ENCODE measurements at regions of chr7 and their contacts with region 1.

Region 1: GRCh38 chr7:91880413-91881241 is at the start of gene MTERF1:
- DNase-seq: peak; percentile 94 to 96
- H3K4me3 ChIP-seq: peak within 1 kb of the TSS; percentile 51
- H3K4me3 Mint-ChIP-seq: peak within 1 kb of the TSS; percentile 90
- H3K27ac Mint-ChIP-seq: peak within 1 kb of the TSS; percentile 86
- H3K4me1 ChIP-seq: no peaks in the 10 kb centered on the region
- H3K4me1 Mint-ChIP-seq: no peaks in the 10 kb centered on the region
- H3K27me3 ChIP-seq: no peaks in the 10 kb centered on the region
- H3K27me3 Mint-ChIP-seq: no peaks in the 10 kb centered on the region
- CTCF ChIP-seq: peak; percentile 97 to 100
- total RNA-seq, gene MTERF1: 16.2 and 16.9 TPM in 2 replicates

Region 2: DNA sequence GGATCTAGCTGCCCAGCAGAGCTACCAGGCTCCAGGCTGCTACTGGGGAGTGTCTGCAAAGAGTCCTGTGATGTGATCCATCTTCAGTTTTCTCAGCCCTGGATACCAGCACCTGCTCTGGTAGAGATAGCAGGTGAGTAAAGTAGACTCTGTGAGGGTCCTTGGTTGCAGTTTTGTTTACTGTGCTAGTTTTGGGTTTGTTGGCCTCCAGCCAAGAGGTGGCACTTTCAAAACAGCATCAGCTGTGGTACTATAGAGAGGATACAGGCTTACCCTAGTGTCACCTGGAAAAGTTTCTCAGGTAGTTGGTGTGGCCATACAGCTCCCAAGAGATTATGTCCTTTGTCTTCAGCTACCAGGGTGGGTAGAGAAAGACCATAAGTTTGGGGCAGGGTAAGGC is 56.4 kb before region 1 on chr7:
- CTCF ChIA-PET with region 1: no interaction called
- POLR2A ChIA-PET with region 1: no interaction called
- intact Hi-C with region 1: no loop called
- DNase-seq: no peak
- H3K4me3 ChIP-seq: no peak overlapping the region
- H3K4me3 Mint-ChIP-seq: no peak overlapping the region
- H3K27ac Mint-ChIP-seq: no peak overlapping the region
- H3K4me1 ChIP-seq: no peaks in the 10 kb centered on the region
- H3K4me1 Mint-ChIP-seq: no peaks in the 10 kb centered on the region
- H3K27me3 ChIP-seq: no peaks in the 10 kb centered on the region
- H3K27me3 Mint-ChIP-seq: no peaks in the 10 kb centered on the region
- CTCF ChIP-seq: no peak

Region 3: GRCh38 chr7:91940572-91941341 is 60.1 kb after region 1 on chr7 and contains the start of gene AKAP9:
- CTCF ChIA-PET with region 1: interaction called, 14 read pairs
- POLR2A ChIA-PET with region 1: interaction called, 3 read pairs
- intact Hi-C with region 1: loop called (anchors 2 kb)
- DNase-seq: peak; percentile 95 to 96
- H3K4me3 ChIP-seq: peak within 1 kb of the TSS; percentile 76
- H3K4me3 Mint-ChIP-seq: peak within 1 kb of the TSS; percentile 95
- H3K27ac Mint-ChIP-seq: peak within 1 kb of the TSS; percentile 98
- H3K4me1 ChIP-seq: peaks cover 12% of the 10 kb centered on the region
- H3K4me1 Mint-ChIP-seq: peaks cover 16% of the 10 kb centered on the region
- H3K27me3 ChIP-seq: no peaks in the 10 kb centered on the region
- H3K27me3 Mint-ChIP-seq: no peaks in the 10 kb centered on the region
- CTCF ChIP-seq: no peak
- total RNA-seq, gene AKAP9: 73.8 and 79.4 TPM in 2 replicates

Region 4: GRCh38 chr7:92043637-92044036 is 163.0 kb after region 1 on chr7:
- CTCF ChIA-PET with region 1: interaction called, 4 read pairs
- POLR2A ChIA-PET with region 1: no interaction called
- intact Hi-C with region 1: loop called (anchors 1 kb)
- DNase-seq: no peak
- H3K4me3 ChIP-seq: no peak overlapping the region
- H3K4me3 Mint-ChIP-seq: peak overlapping the region; percentile 40
- H3K27ac Mint-ChIP-seq: peak overlapping the region; percentile 70
- H3K4me1 ChIP-seq: peaks cover 60% of the 10 kb centered on the region
- H3K4me1 Mint-ChIP-seq: peaks cover 27% of the 10 kb centered on the region
- H3K27me3 ChIP-seq: no peaks in the 10 kb centered on the region
- H3K27me3 Mint-ChIP-seq: no peaks in the 10 kb centered on the region
- CTCF ChIP-seq: no peak

Region 5: DNA sequence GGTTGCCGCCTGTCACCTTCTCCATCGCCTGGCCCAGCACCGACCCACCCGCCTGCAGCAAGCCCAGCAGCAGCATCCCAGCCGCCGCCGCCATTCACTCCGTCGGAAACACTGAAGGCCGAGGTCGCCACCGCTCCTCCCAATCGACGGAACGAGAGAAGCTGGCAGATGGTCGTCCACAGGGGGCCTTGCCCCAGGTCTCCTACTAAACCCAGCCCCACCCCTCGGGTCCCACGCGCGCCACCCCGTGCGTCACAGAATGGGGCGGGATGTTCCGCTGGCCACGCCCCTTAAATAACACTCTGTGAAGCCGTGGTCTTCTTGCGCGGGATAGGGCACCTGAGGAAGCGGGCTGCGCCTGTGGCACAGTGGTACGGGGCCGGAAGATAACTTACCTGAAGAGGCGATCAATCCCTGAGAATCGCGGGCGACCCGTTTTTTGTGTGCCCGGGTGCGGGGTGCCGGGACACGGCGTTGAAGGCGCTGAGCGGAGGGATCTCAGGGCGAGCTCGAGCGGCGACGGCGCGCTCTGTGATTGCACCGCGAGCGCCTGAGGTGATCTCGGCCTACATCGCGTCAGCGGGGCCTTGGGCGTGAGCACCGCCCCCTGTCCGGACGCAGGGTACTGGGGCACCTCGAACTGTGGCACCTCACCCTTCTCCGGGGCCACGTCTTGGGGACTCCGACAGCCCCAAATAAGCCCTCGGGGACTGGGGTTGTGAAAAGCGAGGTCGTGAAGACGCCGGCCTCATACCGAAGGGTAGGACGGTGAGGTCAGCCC is 253.8 kb after region 1 on chr7 and contains the start of gene CYP51A1:
- CTCF ChIA-PET with region 1: interaction called, 4 read pairs
- POLR2A ChIA-PET with region 1: no interaction called
- intact Hi-C with region 1: loop called (anchors 2 kb)
- DNase-seq: peak; percentile 93 to 94
- H3K4me3 ChIP-seq: peak within 1 kb of the TSS; percentile 99
- H3K4me3 Mint-ChIP-seq: peak within 1 kb of the TSS; percentile 95
- H3K27ac Mint-ChIP-seq: peak within 1 kb of the TSS; percentile 98
- H3K4me1 ChIP-seq: peaks cover 9% of the 10 kb centered on the region; the same call in 1 of the 2 replicates
- H3K4me1 Mint-ChIP-seq: peaks cover 18% of the 10 kb centered on the region
- H3K27me3 ChIP-seq: no peaks in the 10 kb centered on the region
- H3K27me3 Mint-ChIP-seq: no peaks in the 10 kb centered on the region
- CTCF ChIP-seq: peak in 1 of 2 experiments; percentile 6
- total RNA-seq, gene CYP51A1: 151 and 153 TPM in 2 replicates

Measured in Caco-2 (cell line).